ENCODE measurements at regions of chr7 and their contacts with region 1.

Region 1: DNA sequence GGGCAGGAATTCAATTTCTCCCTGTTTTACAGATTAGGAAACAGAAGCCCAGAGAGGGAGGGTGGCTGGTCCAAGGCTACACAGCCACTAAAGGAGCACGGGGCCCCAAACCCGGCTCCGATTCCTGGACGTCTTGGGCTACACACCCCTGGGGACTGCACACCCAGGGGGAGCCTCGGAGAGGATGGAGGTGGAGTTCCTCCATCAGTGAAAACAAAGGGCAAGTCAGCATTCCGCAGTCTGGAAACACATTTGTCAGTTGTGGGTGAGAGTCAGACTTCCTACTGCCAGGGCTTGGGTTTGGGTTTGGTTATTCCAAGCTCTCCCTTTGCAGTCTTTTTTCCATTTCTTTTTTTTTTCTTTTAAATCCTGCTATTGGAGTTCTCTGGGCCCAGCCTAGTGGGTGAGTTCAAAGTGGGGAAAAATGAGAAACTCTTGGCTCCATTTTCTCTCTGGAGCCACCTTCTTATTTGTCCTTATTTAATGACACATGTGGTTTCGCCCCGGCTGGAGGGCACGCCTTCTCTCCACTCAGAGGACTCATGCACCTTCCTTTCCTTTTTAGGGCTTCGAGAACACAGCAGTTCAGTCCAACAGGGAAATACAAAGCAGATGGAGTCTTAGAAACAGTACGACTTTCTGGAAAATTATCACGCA is 59.9 kb upstream of the AQP1 start:
- DNase-seq: no peak
- ATAC-seq: no peak
- H3K4me3 ChIP-seq: no peak overlapping the region
- H3K4me3 Mint-ChIP-seq: no peak overlapping the region
- H3K27ac ChIP-seq: no peak overlapping the region
- H3K27ac Mint-ChIP-seq: no peak overlapping the region
- H3K4me1 ChIP-seq: no peaks in the 10 kb centered on the region
- H3K4me1 Mint-ChIP-seq: no peaks in the 10 kb centered on the region
- H3K27me3 ChIP-seq: no peaks in the 10 kb centered on the region
- H3K27me3 Mint-ChIP-seq: no peaks in the 10 kb centered on the region
- CTCF ChIP-seq: no peak

Region 2: DNA sequence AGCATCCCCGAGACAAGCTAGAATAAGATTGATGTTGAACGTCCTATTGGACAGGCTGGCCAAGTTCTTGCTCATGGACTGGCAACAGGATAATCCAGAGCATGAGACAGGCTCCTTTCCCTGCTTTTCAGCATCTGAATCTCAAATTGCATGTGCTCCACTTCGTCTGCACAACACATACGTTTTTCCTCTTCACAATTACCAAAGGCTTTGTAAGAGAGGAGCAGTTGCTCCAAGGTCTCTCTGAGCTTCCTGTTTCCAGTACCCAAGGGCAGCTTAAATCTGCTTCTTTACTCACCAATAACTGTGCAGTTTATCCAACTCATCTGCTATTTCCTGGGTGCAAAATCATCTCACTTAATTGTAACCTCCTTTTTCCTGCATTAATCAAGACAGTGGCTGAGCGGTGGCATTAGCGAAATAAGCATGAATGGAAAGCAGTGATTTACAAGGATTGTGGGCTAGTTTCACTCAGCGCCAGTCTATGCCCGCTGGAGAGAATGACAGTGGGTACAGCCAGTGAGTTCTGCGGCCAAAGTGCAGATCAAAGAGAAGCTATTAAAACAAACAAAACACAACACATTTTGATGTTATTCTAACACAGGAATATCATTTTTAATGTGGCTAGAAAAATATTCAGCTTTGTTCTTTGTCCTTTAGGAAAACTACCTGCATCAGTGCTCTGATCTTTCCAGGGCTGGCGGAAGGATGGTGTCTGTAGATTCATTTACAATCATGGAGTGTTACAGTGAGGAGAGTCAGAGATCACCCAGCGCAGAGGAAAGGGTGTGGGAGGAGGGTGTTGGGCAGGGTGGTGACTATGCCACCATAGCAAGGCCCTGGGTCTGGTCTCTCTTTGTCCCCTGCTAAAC is 1577.4 kb before region 1 on chr7:
- CTCF ChIA-PET with region 1: no interaction called
- POLR2A ChIA-PET with region 1: no interaction called
- intact Hi-C with region 1: loop called in 1 of 2 experiments (anchors 5 kb)
- DNase-seq: no peak
- ATAC-seq: no peak
- H3K4me3 ChIP-seq: no peak overlapping the region
- H3K4me3 Mint-ChIP-seq: no peak overlapping the region
- H3K27ac ChIP-seq: no peak overlapping the region
- H3K27ac Mint-ChIP-seq: no peak overlapping the region
- H3K4me1 ChIP-seq: peaks cover 4% of the 10 kb centered on the region
- H3K4me1 Mint-ChIP-seq: peaks cover 11% of the 10 kb centered on the region
- H3K27me3 ChIP-seq: no peaks in the 10 kb centered on the region
- H3K27me3 Mint-ChIP-seq: no peaks in the 10 kb centered on the region
- CTCF ChIP-seq: no peak

Region 3: GRCh38 chr7:30831227-30831626 is 20.6 kb before region 1 on chr7:
- CTCF ChIA-PET with region 1: no interaction called
- POLR2A ChIA-PET with region 1: no interaction called
- intact Hi-C with region 1: no loop called
- DNase-seq: no peak
- ATAC-seq: no peak
- H3K4me3 ChIP-seq: no peak overlapping the region
- H3K4me3 Mint-ChIP-seq: no peak overlapping the region
- H3K27ac ChIP-seq: no peak overlapping the region
- H3K27ac Mint-ChIP-seq: no peak overlapping the region
- H3K4me1 ChIP-seq: no peaks in the 10 kb centered on the region
- H3K4me1 Mint-ChIP-seq: peaks cover 16% of the 10 kb centered on the region
- H3K27me3 ChIP-seq: no peaks in the 10 kb centered on the region
- H3K27me3 Mint-ChIP-seq: no peaks in the 10 kb centered on the region
- CTCF ChIP-seq: no peak

Region 4: DNA sequence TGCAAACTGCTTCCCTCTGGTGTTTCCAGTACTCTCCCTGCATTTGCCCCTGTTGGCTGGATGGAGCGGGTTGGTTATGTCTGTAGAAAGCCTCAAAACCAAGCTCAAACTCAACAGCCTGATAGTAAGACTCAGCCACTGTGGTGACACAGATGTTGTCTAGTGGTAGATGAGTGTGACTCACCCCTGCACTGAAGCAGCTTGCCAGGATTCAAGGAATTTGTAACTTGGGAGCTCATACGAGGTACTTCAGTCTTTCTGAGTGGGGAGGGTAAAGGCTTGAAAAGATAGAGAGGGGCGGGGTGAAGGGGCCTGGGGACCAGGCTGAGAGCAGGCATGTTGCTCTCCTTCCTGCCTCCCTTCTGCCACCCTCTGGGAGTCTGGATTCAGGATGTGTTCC is 37.0 kb after region 1 on chr7:
- CTCF ChIA-PET with region 1: no interaction called
- POLR2A ChIA-PET with region 1: no interaction called
- intact Hi-C with region 1: no loop called
- DNase-seq: no peak
- ATAC-seq: no peak
- H3K4me3 ChIP-seq: no peak overlapping the region
- H3K4me3 Mint-ChIP-seq: no peak overlapping the region
- H3K27ac ChIP-seq: no peak overlapping the region
- H3K27ac Mint-ChIP-seq: no peak overlapping the region
- H3K4me1 ChIP-seq: no peaks in the 10 kb centered on the region
- H3K4me1 Mint-ChIP-seq: no peaks in the 10 kb centered on the region
- H3K27me3 ChIP-seq: no peaks in the 10 kb centered on the region
- H3K27me3 Mint-ChIP-seq: no peaks in the 10 kb centered on the region
- CTCF ChIP-seq: no peak

Measured in CD4-positive, alpha-beta T cell (primary cell).